ENCODE measurements at regions of chr17 and their contacts with region 1.

Region 1: DNA sequence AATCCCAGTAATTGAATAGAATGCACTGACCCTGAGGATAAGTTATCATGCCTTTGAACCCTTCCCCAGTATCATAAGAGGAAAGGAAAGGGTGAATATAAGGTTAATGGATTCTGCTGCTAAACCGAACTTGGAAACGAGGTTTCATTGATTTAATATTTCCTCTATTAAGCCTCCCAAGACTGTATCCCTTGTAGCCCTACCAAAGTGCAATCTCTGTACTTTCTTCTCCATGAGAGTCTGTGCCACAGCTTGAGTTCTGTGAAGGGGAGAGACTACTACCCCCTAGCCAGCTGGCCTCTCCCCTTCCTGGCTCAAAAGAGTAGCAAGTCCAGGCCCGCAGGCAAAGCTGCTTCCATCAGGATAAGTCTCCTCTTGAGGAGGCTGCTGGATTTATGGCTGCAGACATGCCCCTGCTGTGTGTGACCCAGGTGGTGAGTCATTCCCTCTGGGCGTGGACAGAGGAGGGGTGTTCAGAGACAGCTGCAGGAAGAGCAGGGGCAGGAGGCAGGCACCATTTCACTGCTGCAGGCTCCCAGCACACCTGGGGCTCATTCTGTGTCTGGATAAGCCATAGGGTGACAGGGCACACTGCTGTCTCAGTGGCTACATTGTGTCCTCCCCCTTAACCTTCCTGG is 58.4 kb downstream of the TOM1L2 start:
- DNase-seq: no peak
- ATAC-seq: peak; percentile 99
- H3K4me3 ChIP-seq: no peak overlapping the region; a peak in 1 of 4 replicates
- H3K27ac ChIP-seq: peak overlapping the region; percentile 89
- H3K4me1 ChIP-seq: peaks cover 28% of the 10 kb centered on the region
- H3K27me3 ChIP-seq: no peaks in the 10 kb centered on the region
- CTCF ChIP-seq: no peak

Region 2: DNA sequence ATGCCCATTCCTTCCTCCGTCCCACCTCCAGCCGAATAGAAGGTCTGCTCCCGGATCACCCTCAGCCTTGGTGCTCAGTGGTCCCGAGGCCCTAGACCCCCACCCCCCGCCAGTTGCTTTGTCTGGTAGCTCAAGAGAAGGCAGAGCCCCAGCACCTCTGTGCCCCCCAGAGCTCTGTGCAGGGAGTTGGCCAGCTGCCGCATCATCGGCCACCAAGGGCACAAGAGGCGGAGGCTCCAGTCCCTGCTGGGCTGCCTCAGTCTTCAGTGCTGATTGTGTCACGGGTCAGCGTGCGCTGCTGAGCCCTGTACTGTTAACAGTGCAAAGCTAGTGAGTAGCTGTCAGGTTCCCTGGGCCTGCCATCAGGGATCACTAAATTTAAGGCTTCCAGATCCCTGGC is 151.7 kb after region 1 on chr17:
- CTCF ChIA-PET with region 1: no interaction called
- POLR2A ChIA-PET with region 1: interaction called, 10 read pairs
- in situ Hi-C with region 1: no loop called
- intact Hi-C with region 1: no loop called
- DNase-seq: no peak
- ATAC-seq: no peak
- H3K4me3 ChIP-seq: no peak overlapping the region
- H3K27ac ChIP-seq: no peak overlapping the region
- H3K4me1 ChIP-seq: no peaks in the 10 kb centered on the region
- H3K27me3 ChIP-seq: no peaks in the 10 kb centered on the region
- CTCF ChIP-seq: no peak

Measured in Panc1 (cell line).